Activated CD8-positive, alpha-beta T cell treated with anti-CD3 and anti-CD28 coated beads, Interleukin-2, amount 10 ng/mL, durations not matched to agents 7 days and 5 days (primary cell): ENCODE measurements at regions of chr10 and their contacts with region 1.

Region 1: GRCh38 chr10:73096449-73097304 is at the start of gene P4HA1:
- DNase-seq: peak; percentile 99
- ATAC-seq: peak; percentile 94
- H3K4me3 Mint-ChIP-seq: peak within 1 kb of the TSS; percentile 90
- H3K27ac Mint-ChIP-seq: peak within 1 kb of the TSS; percentile 91
- H3K4me1 Mint-ChIP-seq: peaks cover 33% of the 10 kb centered on the region
- H3K27me3 Mint-ChIP-seq: no peaks in the 10 kb centered on the region
- total RNA-seq, gene P4HA1: 37.4 to 38.9 TPM

Region 2: GRCh38 chr10:73060738-73061635 is 35.7 kb before region 1 on chr10:
- CTCF ChIA-PET with region 1: interaction called, 20 read pairs
- POLR2A ChIA-PET with region 1: no interaction called
- DNase-seq: no peak
- ATAC-seq: peak; percentile 53
- H3K4me3 Mint-ChIP-seq: no peak overlapping the region
- H3K27ac Mint-ChIP-seq: no peak overlapping the region
- H3K4me1 Mint-ChIP-seq: peaks cover 11% of the 10 kb centered on the region
- H3K27me3 Mint-ChIP-seq: no peaks in the 10 kb centered on the region

Region 3: DNA sequence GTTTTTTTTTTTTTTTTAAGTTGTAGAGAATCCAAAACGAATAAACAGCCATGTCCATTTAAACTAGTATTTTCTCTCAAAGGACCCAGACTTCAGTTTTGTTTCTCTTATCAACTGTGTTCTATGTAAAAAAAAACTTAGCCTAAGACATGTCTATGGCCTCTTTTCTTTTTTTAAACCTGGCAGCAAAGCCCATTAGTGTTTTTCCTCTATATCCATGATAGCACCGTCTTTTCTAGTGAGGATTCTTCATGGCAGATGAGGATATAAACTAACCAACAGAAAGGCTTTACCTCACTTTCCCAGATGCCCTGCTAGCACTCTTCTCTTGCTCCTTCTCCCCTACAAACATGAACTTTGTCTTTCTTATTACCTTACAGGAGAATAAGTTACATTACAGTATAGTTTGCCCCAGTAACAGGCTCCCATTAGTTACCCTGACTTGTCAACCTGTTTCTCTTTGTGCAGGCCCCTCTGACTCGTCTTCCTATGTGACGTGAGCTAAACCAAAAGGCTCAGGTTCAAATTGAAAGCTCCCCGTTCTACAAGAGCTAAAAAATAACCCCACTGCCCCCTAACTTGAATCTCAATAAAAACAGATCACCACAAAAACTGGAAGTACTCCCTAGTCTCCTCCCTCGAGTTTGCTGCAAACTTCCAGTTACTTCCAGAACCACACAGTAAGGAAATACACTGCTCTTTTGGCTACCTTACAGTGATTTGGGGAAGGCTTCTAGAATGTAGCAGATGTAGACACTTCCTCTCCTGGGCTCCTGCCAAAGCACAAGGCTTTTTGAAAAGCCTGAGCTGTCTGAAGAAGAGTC is 20.1 kb before region 1 on chr10:
- CTCF ChIA-PET with region 1: interaction called, 27 read pairs
- POLR2A ChIA-PET with region 1: interaction called, 13 read pairs
- DNase-seq: no peak
- ATAC-seq: no peak
- H3K4me3 Mint-ChIP-seq: no peak overlapping the region
- H3K27ac Mint-ChIP-seq: peak overlapping the region; percentile 75
- H3K4me1 Mint-ChIP-seq: peaks cover 13% of the 10 kb centered on the region
- H3K27me3 Mint-ChIP-seq: no peaks in the 10 kb centered on the region

Region 4: DNA sequence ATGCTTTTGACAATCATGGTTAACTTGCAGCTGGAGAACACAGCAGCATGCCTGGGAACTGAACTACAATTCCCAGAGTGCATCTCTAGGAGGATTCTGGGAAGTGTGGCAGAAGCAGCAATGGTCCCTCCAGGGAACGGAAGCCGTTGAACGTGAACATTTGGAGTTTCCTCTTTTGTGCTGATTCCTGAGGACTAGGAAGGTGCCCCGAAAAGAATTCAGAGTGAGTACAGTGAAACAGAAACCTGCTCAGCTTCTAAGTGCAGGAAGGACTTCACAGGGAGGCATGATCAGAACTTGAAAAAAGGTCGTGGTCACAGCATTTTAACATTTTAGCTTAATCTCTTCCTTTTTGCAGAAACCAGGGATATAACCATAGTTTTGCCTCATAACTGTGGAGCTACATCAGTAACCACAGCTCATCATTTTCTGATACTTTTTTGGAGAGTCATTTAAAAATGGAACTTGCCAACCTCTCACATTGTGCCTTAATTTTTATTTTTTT is 13.7 kb after region 1 on chr10 and contains the start of gene NUDT13:
- CTCF ChIA-PET with region 1: interaction called, 36 read pairs
- POLR2A ChIA-PET with region 1: interaction called, 9 read pairs
- DNase-seq: peak; percentile 58
- ATAC-seq: peak; percentile 84
- H3K4me3 Mint-ChIP-seq: peak within 1 kb of the TSS; percentile 82
- H3K27ac Mint-ChIP-seq: peak within 1 kb of the TSS; percentile 90
- H3K4me1 Mint-ChIP-seq: peaks cover 15% of the 10 kb centered on the region
- H3K27me3 Mint-ChIP-seq: no peaks in the 10 kb centered on the region
- total RNA-seq, gene NUDT13: 1.6 to 1.7 TPM

Region 5: GRCh38 chr10:73159038-73159648 is 62.5 kb after region 1 on chr10:
- CTCF ChIA-PET with region 1: interaction called, 86 read pairs
- POLR2A ChIA-PET with region 1: interaction called, 4 read pairs
- DNase-seq: peak; percentile 68
- ATAC-seq: peak; percentile 68
- H3K4me3 Mint-ChIP-seq: no peak overlapping the region
- H3K27ac Mint-ChIP-seq: no peak overlapping the region
- H3K4me1 Mint-ChIP-seq: peaks cover 32% of the 10 kb centered on the region
- H3K27me3 Mint-ChIP-seq: no peaks in the 10 kb centered on the region

Region 6: GRCh38 chr10:73167783-73168464 is 71.2 kb after region 1 on chr10 and contains the starts of genes ECD and FAM149B1:
- CTCF ChIA-PET with region 1: interaction called, 86 read pairs
- POLR2A ChIA-PET with region 1: interaction called, 6 read pairs
- DNase-seq: peak; percentile 95
- ATAC-seq: peak; percentile 97
- H3K4me3 Mint-ChIP-seq: peak within 1 kb of the TSS; percentile 98
- H3K27ac Mint-ChIP-seq: peak within 1 kb of the TSS; percentile 99
- H3K4me1 Mint-ChIP-seq: peaks cover 34% of the 10 kb centered on the region
- H3K27me3 Mint-ChIP-seq: no peaks in the 10 kb centered on the region
- total RNA-seq, gene ECD: 29.0 to 30.9 TPM
- total RNA-seq, gene FAM149B1: 13.8 to 15.0 TPM